A549 (cell line): ENCODE measurements at regions of chr1 and their contacts with region 1.

Region 1: GRCh38 chr1:228734881-228735801 is at the start of gene RHOU:
- DNase-seq: peak; percentile 67 to 68
- ATAC-seq: peak; percentile 95
- H3K4me3 ChIP-seq: peak within 1 kb of the TSS; percentile 88
- H3K27ac ChIP-seq: peak within 1 kb of the TSS; percentile 93 to 95
- H3K4me1 ChIP-seq: peaks cover 18% of the 10 kb centered on the region; the same call in 2 of the 3 replicates
- CTCF ChIP-seq: peak; percentile 96
- EP300 ChIP-seq: no peak
- POLR2A ChIP-seq: peak; percentile 37; the same call in 1 of the 2 replicates
- RAD21 ChIP-seq: peak; percentile 56 to 98
- polyA plus RNA-seq, gene RHOU: 11.5 and 12.8 TPM in 2 replicates

Region 2: GRCh38 chr1:228646717-228647522 is 88.2 kb before region 1 on chr1:
- CTCF ChIA-PET with region 1: no interaction called
- POLR2A ChIA-PET with region 1: no interaction called
- DNase-seq: peak; percentile 31 to 83
- ATAC-seq: peak; percentile 82
- H3K4me3 ChIP-seq: peak overlapping the region; percentile 57
- H3K27ac ChIP-seq: peak overlapping the region; percentile 81 to 87
- H3K4me1 ChIP-seq: peaks cover 14% of the 10 kb centered on the region
- CTCF ChIP-seq: no peak
- EP300 ChIP-seq: no peak
- POLR2A ChIP-seq: peak; percentile 27; the same call in 1 of the 2 replicates
- RAD21 ChIP-seq: no peak

Region 3: DNA sequence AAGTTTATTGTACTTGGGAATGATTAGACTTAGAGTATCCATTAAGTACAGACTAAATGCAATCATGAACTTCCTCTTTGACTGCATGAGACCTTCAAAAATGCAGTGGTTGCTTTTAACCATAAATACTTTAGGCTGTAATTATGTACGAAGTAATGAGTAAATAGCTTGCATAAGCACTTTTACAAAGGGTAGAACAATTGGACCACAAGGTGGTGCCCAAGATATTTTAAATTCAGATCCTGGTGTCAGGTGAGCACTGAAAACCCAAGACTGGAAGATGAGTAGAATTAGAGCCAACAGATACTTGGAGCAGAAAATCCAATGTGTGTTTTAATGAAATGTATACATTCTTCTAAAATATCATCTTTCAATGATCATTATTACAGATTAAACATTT is 43.2 kb before region 1 on chr1:
- CTCF ChIA-PET with region 1: interaction called, 13 read pairs
- POLR2A ChIA-PET with region 1: no interaction called
- DNase-seq: peak; percentile 69 to 72
- ATAC-seq: peak in 1 of 2 experiments; percentile 80; a peak in 4 of 6 replicates
- H3K4me3 ChIP-seq: no peak overlapping the region
- H3K27ac ChIP-seq: no peak overlapping the region
- H3K4me1 ChIP-seq: peaks cover 7% of the 10 kb centered on the region; the same call in 1 of the 3 replicates
- CTCF ChIP-seq: peak; percentile 77
- EP300 ChIP-seq: no peak
- POLR2A ChIP-seq: no peak
- RAD21 ChIP-seq: peak; percentile 87 to 89

Region 4: DNA sequence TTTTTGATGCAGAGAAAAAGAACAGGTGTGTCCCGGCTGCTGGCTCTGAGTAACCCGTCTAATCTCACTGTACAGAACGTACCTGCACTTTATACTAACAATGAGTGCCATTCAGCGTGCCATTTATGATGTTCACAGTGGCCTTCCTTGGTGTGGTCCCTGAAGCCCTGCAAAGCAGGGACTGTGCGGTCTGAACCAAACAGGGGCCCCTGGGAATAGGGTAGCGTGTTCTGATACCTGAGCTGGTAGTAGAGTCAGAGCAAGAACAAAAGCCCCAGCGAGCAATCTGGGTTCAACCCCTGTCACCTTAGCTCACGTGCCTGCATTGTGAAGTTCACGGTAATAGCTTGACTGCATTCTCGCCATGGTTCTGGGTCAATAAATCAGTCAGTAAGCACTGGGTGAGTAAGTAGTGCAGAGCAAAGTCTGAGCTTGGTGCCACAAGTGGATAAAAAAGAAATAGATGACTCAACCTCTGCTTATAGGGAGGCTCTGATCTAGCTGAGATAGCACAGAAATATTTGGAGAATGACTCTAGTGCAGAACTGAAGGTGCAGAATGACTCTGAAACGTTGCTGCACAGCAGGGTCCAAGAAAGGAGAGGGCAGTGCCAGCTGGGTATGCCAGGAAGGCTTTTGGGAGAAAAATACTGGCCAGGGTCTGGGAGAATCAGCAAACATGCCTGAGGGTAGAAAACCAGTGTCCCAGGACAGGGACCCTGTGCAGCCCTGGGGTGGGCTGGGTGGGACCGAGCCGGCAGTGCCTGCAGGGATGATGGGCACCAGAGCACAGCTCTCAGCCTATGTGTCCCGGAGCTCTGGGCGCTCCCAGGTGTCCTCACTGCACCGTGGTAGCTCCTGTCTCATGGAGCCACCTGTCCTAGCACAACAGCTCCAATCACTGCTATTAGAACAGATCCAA is 126.0 kb after region 1 on chr1:
- CTCF ChIA-PET with region 1: interaction called, 13 read pairs
- POLR2A ChIA-PET with region 1: interaction called, 3 read pairs
- DNase-seq: peak; percentile 89 to 94
- ATAC-seq: peak; percentile 97
- H3K4me3 ChIP-seq: peak overlapping the region; percentile 12; the same call in 2 of the 3 replicates
- H3K27ac ChIP-seq: peak overlapping the region; percentile 78 to 86
- H3K4me1 ChIP-seq: peaks cover 58% of the 10 kb centered on the region
- CTCF ChIP-seq: no peak
- EP300 ChIP-seq: peak; percentile 58 to 81; a peak in 3 of 5 replicates
- POLR2A ChIP-seq: no peak
- RAD21 ChIP-seq: peak; percentile 42 to 64

Region 5: GRCh38 chr1:229156872-229157271 is 421.7 kb after region 1 on chr1:
- CTCF ChIA-PET with region 1: interaction called, 10 read pairs
- POLR2A ChIA-PET with region 1: no interaction called
- DNase-seq: peak; percentile 33 to 57
- ATAC-seq: peak; percentile 70 to 80; a peak in 4 of 6 replicates
- H3K4me3 ChIP-seq: no peak overlapping the region
- H3K27ac ChIP-seq: no peak overlapping the region; a peak in 1 of 6 replicates
- H3K4me1 ChIP-seq: no peaks in the 10 kb centered on the region
- CTCF ChIP-seq: peak; percentile 50; the same call in 2 of the 3 replicates
- EP300 ChIP-seq: no peak
- POLR2A ChIP-seq: no peak
- RAD21 ChIP-seq: peak; percentile 75 to 76